Prostate gland (tissue), 2 donors: ENCODE measurements at regions of chr12 and their contacts with region 1.

Region 1: GRCh38 chr12:42129595-42130204 is 15.0 kb downstream of the GXYLT1 start:
- DNase-seq: peak; percentile 48
- H3K4me3 ChIP-seq: no peak overlapping the region
- H3K27ac ChIP-seq: no peak overlapping the region
- H3K4me1 ChIP-seq: peaks cover 12% of the 10 kb centered on the region
- H3K27me3 ChIP-seq: no peaks in the 10 kb centered on the region
- CTCF ChIP-seq: peak; percentile 46 to 89 (median 80)
- POLR2A ChIP-seq: no peak

Region 2: GRCh38 chr12:42027546-42027945 is 102.2 kb before region 1 on chr12:
- intact Hi-C with region 1: no loop called
- DNase-seq: no peak
- H3K4me3 ChIP-seq: no peak overlapping the region
- H3K27ac ChIP-seq: no peak overlapping the region
- H3K4me1 ChIP-seq: no peaks in the 10 kb centered on the region
- H3K27me3 ChIP-seq: no peaks in the 10 kb centered on the region
- CTCF ChIP-seq: no peak
- POLR2A ChIP-seq: no peak

Region 3: GRCh38 chr12:42332301-42333285 is 202.9 kb after region 1 on chr12:
- intact Hi-C with region 1: loop called (anchors 5 kb)
- DNase-seq: peak; percentile 30
- H3K4me3 ChIP-seq: no peak overlapping the region
- H3K27ac ChIP-seq: no peak overlapping the region
- H3K4me1 ChIP-seq: peaks cover under 1% of the 10 kb centered on the region
- H3K27me3 ChIP-seq: no peaks in the 10 kb centered on the region
- CTCF ChIP-seq: peak in 3 of 4 experiments; percentile 48 to 72 (median 67)
- POLR2A ChIP-seq: no peak

Region 4: DNA sequence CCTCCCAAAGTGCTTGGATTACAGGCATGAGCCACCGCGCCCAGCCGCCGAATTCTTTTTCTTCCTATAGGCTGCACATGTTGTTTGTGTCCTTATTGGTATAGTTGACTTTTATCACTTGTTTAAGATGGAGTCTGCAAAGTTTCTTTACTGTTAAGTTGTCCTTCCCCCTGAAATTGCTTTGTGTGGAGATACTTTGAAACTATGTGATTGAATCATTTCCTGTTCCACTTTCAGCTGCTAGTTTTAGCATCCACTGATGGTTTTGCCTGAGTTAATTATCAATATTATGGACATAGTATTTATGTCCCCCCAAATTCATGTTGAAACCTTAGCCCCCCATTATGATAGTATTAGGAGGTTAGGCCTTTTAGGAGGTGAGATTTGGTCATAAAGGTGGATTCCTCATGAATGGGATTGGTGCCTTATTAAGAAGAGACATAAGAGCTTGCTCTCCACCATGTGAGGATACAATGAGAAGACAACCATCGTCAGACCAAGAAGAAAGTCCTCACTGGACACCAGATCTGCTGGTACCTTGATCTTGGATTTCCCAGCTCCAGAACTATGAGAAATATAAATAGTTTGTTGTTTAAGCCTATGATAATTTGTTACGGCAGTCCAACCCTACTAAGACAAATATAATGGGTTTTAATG is 231.2 kb after region 1 on chr12:
- intact Hi-C with region 1: no loop called
- DNase-seq: no peak
- H3K4me3 ChIP-seq: no peak overlapping the region
- H3K27ac ChIP-seq: no peak overlapping the region
- H3K4me1 ChIP-seq: no peaks in the 10 kb centered on the region
- H3K27me3 ChIP-seq: no peaks in the 10 kb centered on the region
- CTCF ChIP-seq: no peak
- POLR2A ChIP-seq: no peak

Region 5: GRCh38 chr12:42568952-42569915 is 439.5 kb after region 1 on chr12:
- intact Hi-C with region 1: loop called (anchors 10 kb)
- DNase-seq: no peak
- H3K4me3 ChIP-seq: no peak overlapping the region
- H3K27ac ChIP-seq: no peak overlapping the region
- H3K4me1 ChIP-seq: no peaks in the 10 kb centered on the region
- H3K27me3 ChIP-seq: no peaks in the 10 kb centered on the region
- CTCF ChIP-seq: peak in 3 of 4 experiments; percentile 23 to 55 (median 49)
- POLR2A ChIP-seq: no peak

Region 6: DNA sequence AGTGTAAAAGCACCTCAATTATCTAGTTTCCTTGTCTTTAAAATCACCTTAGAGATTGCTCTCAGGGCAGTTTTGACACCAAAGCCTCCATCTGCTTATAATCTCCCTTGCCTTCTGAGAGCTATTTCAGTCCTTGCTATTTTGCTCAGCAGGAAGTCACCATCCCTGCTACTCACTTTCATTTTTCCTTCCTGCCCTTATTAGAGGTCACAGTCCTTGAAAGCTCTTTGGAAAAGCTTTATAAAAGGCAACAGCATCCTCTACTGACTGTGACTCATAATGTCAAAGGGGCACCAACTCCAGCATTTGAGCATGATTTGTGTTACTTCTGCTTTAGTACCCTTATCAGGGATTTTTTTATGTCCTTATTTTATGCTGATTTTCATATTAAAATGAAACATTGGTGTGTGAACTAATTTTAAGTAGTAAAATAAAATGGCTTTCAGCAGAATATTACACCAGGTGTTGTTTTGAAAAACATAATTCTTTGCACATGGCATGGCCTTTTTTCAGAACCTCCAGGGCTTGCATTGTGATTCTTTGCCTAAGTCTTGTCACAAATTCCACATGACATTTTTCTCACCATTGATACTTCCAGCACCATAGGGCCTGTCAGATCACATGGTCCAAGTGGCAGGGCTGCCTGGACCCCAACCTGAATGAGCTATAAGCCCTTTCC is 1209.3 kb after region 1 on chr12:
- intact Hi-C with region 1: loop called (anchors 5 kb)
- DNase-seq: no peak
- H3K4me3 ChIP-seq: no peak overlapping the region
- H3K27ac ChIP-seq: no peak overlapping the region
- H3K4me1 ChIP-seq: no peaks in the 10 kb centered on the region
- H3K27me3 ChIP-seq: no peaks in the 10 kb centered on the region
- CTCF ChIP-seq: peak in 2 of 4 experiments; percentile 54 to 57
- POLR2A ChIP-seq: no peak